ENCODE measurements at regions of chr20 and their contacts with region 1.

Region 1: GRCh38 chr20:50929299-50930138 is 1.7 kb downstream of the ADNP start:
- DNase-seq: peak; percentile 83 to 98
- ATAC-seq: peak; percentile 64 to 87
- H3K4me3 ChIP-seq: peak overlapping the region; percentile 83
- H3K27ac ChIP-seq: peak overlapping the region; percentile 98 to 99
- H3K4me1 ChIP-seq: peaks cover 40% of the 10 kb centered on the region
- CTCF ChIP-seq: peak; percentile 99
- EP300 ChIP-seq: no peak
- POLR2A ChIP-seq: no peak
- RAD21 ChIP-seq: peak; percentile 71 to 73

Region 2: DNA sequence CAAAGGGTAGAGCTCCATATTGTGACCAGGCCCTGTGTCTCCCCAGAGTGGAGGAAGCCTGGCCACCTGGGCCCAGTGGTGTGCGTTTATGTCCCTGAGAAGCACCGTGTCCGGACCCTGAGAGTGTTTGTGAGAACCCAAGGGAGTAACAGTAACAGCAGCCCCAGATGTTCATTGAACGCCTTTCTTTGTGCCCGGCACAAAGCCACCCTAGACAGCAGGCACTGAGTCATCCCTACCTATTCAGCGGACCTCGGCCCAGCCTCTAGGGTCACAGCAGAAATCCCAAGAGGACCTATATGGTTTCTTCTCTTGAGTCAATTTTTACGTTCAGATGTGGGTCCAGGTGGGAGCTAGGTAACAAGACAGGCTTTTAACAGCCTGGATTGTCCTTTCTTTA is 110.2 kb before region 1 on chr20:
- CTCF ChIA-PET with region 1: interaction called, 17 read pairs
- POLR2A ChIA-PET with region 1: no interaction called
- DNase-seq: no peak
- ATAC-seq: no peak
- H3K4me3 ChIP-seq: no peak overlapping the region
- H3K27ac ChIP-seq: no peak overlapping the region
- H3K4me1 ChIP-seq: peaks cover 12% of the 10 kb centered on the region
- CTCF ChIP-seq: no peak
- EP300 ChIP-seq: no peak
- POLR2A ChIP-seq: no peak
- RAD21 ChIP-seq: no peak

Region 3: DNA sequence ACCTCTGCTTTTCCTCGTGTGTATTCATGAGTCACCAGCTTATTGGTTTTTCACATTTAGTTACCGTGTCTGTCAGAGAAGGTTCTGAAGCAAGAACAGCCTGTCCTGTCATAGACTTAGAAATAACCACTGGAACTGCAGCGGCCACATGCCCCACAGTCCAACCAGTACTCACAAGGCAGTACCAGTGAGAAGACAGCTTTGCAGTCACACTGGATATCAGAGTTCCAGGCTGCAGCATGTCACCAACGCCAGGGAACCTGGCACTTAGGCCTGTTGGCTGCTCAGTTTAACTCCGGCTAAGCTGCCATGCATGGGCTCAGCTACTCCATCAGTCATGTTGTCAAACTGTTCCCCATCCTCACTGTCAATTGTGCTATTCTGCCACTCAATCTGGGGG is 38.4 kb before region 1 on chr20:
- CTCF ChIA-PET with region 1: interaction called, 13 read pairs
- POLR2A ChIA-PET with region 1: no interaction called
- DNase-seq: no peak
- ATAC-seq: peak in 1 of 2 experiments; percentile 19; a peak in 3 of 6 replicates
- H3K4me3 ChIP-seq: no peak overlapping the region
- H3K27ac ChIP-seq: no peak overlapping the region
- H3K4me1 ChIP-seq: peaks cover 10% of the 10 kb centered on the region
- CTCF ChIP-seq: no peak
- EP300 ChIP-seq: no peak
- POLR2A ChIP-seq: no peak
- RAD21 ChIP-seq: no peak

Region 4: DNA sequence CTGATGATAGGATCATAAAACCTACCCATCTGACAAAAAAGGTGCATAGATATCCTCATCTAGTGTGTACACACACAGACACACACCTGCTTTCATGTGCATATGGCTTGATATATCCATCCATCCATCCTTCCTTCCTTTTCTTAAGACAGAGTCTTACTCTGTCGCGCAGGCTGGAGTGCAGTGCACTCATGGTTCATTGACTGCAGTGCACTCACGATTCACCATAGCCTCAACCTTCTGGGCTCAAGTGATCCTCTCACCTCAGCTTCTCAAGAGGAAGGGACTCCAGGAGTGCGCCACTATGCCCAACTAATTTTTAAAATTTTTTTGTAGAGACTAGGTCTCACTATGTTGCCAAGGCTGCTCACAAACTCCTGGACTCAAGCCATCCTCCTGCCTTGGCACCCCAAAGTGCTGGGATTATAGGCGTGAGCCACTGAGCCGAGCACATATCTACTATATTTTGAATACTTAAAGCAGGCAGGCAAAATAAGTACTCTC is 25.4 kb before region 1 on chr20:
- CTCF ChIA-PET with region 1: interaction called, 167 read pairs
- POLR2A ChIA-PET with region 1: interaction called, 3 read pairs
- DNase-seq: no peak
- ATAC-seq: no peak
- H3K4me3 ChIP-seq: no peak overlapping the region
- H3K27ac ChIP-seq: no peak overlapping the region
- H3K4me1 ChIP-seq: no peaks in the 10 kb centered on the region
- CTCF ChIP-seq: no peak
- EP300 ChIP-seq: no peak
- POLR2A ChIP-seq: no peak
- RAD21 ChIP-seq: no peak

Region 5: DNA sequence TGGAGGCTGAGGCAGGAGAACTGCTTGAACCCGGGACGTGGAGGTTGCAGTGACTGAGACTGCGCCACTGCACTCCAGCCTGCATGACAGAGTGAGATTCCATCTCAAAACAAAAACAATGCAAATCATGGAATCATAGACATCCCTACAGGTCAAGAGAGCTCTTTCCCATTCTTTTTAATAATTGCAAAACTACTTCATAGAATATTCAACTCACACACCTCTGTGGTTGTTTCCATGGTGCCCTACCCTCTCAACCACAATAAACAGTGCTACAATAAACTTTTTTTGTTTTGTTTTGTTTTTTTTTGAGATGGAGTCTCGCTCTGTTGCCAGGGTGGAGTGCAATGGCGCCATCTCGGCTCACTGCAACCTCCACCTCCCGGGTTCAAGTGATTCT is 13.6 kb after region 1 on chr20:
- CTCF ChIA-PET with region 1: interaction called, 15 read pairs
- POLR2A ChIA-PET with region 1: interaction called, 6 read pairs
- DNase-seq: no peak
- ATAC-seq: peak in 1 of 2 experiments; percentile 29; a peak in 2 of 6 replicates
- H3K4me3 ChIP-seq: no peak overlapping the region
- H3K27ac ChIP-seq: no peak overlapping the region
- H3K4me1 ChIP-seq: no peaks in the 10 kb centered on the region
- CTCF ChIP-seq: no peak
- EP300 ChIP-seq: no peak
- POLR2A ChIP-seq: no peak
- RAD21 ChIP-seq: no peak

Region 6: GRCh38 chr20:50958615-50959542 is 29.4 kb after region 1 on chr20 and contains the start of gene MOCS3:
- CTCF ChIA-PET with region 1: interaction called, 9 read pairs
- POLR2A ChIA-PET with region 1: interaction called, 34 read pairs
- DNase-seq: peak; percentile 81 to 95
- ATAC-seq: peak; percentile 84 to 86
- H3K4me3 ChIP-seq: peak within 1 kb of the TSS; percentile 85
- H3K27ac ChIP-seq: peak within 1 kb of the TSS; percentile 89 to 98
- H3K4me1 ChIP-seq: peaks cover 17% of the 10 kb centered on the region
- CTCF ChIP-seq: no peak
- EP300 ChIP-seq: no peak
- POLR2A ChIP-seq: no peak
- RAD21 ChIP-seq: no peak
- polyA plus RNA-seq, gene MOCS3: 4.4 and 4.8 TPM in 2 replicates

Region 7: GRCh38 chr20:51116771-51117686 is 187.5 kb after region 1 on chr20:
- CTCF ChIA-PET with region 1: no interaction called
- POLR2A ChIA-PET with region 1: no interaction called
- DNase-seq: no peak
- ATAC-seq: no peak
- H3K4me3 ChIP-seq: no peak overlapping the region
- H3K27ac ChIP-seq: peak overlapping the region in 1 of 2 experiments; percentile 73; a peak in 1 of 6 replicates
- H3K4me1 ChIP-seq: peaks cover 36% of the 10 kb centered on the region
- CTCF ChIP-seq: no peak
- EP300 ChIP-seq: no peak
- POLR2A ChIP-seq: no peak
- RAD21 ChIP-seq: no peak